Activated B cell treated with CpG ODN at 0.5 μM for 24 hours (primary cell): ENCODE measurements at regions of chr1 and their contacts with region 1.

Region 1: DNA sequence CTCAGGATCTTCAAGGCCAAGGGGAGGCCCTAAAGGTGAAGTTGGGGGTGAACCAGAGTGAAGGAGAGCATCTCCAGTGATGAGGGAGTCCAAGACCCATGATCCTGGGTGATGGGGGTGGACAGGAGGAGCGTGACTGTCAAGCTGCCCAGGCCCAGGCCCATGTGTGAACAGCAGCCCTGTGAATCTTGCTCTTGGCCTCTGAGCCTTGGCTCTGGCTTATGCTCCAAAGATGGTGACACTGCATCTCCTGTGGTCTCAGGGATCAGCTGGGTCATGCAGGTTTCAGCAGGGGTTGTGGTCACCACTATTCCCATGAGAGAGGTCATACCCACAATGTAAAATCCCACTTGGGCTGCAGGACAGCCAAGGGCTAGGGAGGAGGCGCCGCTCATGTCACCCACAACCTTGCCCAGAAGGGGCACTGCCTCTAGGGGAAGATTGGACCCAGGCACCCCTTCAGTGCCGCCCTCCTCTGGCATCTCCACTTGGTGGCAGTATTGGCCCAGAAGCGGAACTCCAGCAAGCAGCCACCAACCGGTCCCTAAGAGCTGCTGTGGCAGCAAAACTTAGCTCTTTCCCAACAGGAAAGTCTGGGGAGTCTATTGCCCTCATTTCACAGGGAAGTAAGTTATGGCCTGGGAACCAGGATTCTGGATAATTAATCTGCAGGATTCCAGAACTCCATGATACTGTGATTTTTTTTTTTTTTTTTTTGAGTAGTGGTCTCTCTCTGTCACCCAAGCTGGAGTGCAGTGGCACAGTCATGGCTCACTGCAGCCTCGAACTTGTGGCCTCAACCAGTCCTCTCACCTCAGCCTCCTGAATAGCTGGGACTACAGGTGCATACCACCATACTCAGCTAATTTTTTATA is 7.5 kb upstream of the WNT3A start:
- DNase-seq: peak; percentile 40
- ATAC-seq: peak; percentile 95
- H3K4me3 Mint-ChIP-seq: no peak overlapping the region
- H3K27ac Mint-ChIP-seq: no peak overlapping the region
- H3K4me1 Mint-ChIP-seq: no peaks in the 10 kb centered on the region
- H3K27me3 Mint-ChIP-seq: peaks cover 26% of the 10 kb centered on the region
- CTCF ChIP-seq: no peak

Region 2: GRCh38 chr1:228515200-228515834 is 516.0 kb after region 1 on chr1:
- CTCF ChIA-PET with region 1: interaction called, 11 read pairs
- POLR2A ChIA-PET with region 1: no interaction called
- intact Hi-C with region 1: loop called (anchors 1 kb)
- DNase-seq: no peak
- ATAC-seq: peak; percentile 45
- H3K4me3 Mint-ChIP-seq: no peak overlapping the region
- H3K27ac Mint-ChIP-seq: no peak overlapping the region
- H3K4me1 Mint-ChIP-seq: no peaks in the 10 kb centered on the region
- H3K27me3 Mint-ChIP-seq: peaks cover 18% of the 10 kb centered on the region
- CTCF ChIP-seq: no peak